BJ (cell line): ENCODE measurements at regions of chr9 and their contacts with region 1.

Region 1: GRCh38 chr9:13974891-13975290 is 339.1 kb downstream of the NFIB start:
- DNase-seq: no peak
- H3K4me3 ChIP-seq: no peak overlapping the region
- H3K27me3 ChIP-seq: no peaks in the 10 kb centered on the region; the same call in 1 of the 2 replicates
- CTCF ChIP-seq: no peak

Region 2: DNA sequence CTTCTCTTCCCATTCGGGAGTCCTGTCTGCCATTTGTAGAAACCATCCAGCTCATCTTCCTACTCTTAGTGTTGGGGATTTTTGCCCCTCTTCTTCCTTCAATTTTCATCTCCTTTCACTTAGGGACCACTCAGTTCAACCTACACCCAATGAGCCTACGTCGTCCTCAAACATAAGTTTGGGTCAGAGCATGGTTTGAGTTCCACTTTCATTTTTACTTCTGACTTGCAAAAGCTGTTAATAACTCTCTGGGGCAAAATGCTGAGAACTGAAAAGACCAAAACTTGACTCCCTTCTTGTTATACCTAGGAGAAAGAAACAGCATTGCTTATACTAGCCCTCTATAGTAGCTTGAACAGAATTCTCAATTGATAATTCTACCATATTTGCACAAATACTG is 313.9 kb before region 1 on chr9:
- CTCF ChIA-PET with region 1: no interaction called
- POLR2A ChIA-PET with region 1: interaction called, 11 read pairs
- DNase-seq: no peak
- H3K4me3 ChIP-seq: no peak overlapping the region
- H3K27me3 ChIP-seq: no peaks in the 10 kb centered on the region
- CTCF ChIP-seq: no peak

Region 3: DNA sequence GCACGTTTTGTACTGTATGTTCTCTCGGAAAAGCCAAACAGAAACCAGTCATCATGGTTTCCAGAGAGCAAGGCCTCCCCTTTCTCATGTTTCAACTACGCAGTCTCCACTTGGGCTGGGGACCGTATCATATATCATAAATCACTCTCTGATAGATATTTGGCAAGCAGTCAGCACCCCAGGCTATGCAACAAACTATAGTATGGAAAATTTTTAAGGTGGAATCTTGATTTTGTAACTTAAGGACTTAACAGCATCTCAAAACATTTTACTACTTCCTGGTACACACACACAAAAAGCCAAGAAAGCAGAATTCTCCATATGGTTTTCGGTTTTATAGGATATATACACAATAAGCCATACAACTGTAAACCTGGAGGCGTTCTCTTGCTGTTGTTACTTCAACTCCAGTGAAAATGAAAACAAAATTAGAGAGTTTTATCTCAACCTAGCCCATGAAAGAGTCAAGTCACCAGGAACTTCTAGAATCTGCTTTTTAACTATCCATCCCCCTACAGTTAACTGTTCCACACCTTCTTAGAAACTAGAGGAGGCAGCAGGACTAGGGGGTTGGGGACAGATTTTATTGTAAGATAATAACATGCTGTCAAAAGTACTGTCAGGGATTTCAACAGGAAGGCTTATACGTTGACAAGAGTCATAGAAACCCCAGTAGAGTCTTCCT is 55.6 kb after region 1 on chr9:
- CTCF ChIA-PET with region 1: no interaction called
- POLR2A ChIA-PET with region 1: no interaction called
- DNase-seq: no peak
- H3K4me3 ChIP-seq: peak overlapping the region; percentile 2; the same call in 1 of the 2 replicates
- H3K27me3 ChIP-seq: no peaks in the 10 kb centered on the region
- CTCF ChIP-seq: no peak